ENCODE measurements at regions of chr1 and their contacts with region 1.

Region 1: GRCh38 chr1:110963691-110964399 is at the start of gene LRIF1:
- DNase-seq: peak; percentile 98 to 99
- ATAC-seq: peak; percentile 96 to 97
- H3K4me3 ChIP-seq: peak within 1 kb of the TSS; percentile 76 to 83 (median 80)
- H3K27ac ChIP-seq: peak within 1 kb of the TSS; percentile 89 to 97 (median 92)
- H3K4me1 ChIP-seq: peaks cover 32 to 34% of the 10 kb centered on the region in 2 donors
- H3K27me3 ChIP-seq: peaks cover 12 to 26% (median 13%) of the 10 kb centered on the region in 3 donors
- CTCF ChIP-seq: peak; percentile 57 to 74 (median 61)
- POLR2A ChIP-seq: peak; percentile 93
- total RNA-seq, gene LRIF1: 8.3 to 16.7 (median 12.3) TPM

Region 2: GRCh38 chr1:111448918-111449702 is 485.3 kb after region 1 on chr1 and contains the starts of genes ATP5PB and WDR77:
- in situ Hi-C with region 1: no loop called
- intact Hi-C with region 1: loop called (anchors 5 kb)
- DNase-seq: peak; percentile 96 to 98
- ATAC-seq: peak; percentile 98 to 99
- H3K4me3 ChIP-seq: peak within 1 kb of the TSS; percentile 76 to 97 (median 88)
- H3K27ac ChIP-seq: peak within 1 kb of the TSS; percentile 83 to 96 (median 92)
- H3K4me1 ChIP-seq: peaks cover 40 to 42% of the 10 kb centered on the region in 2 donors
- H3K27me3 ChIP-seq: no peaks in the 10 kb centered on the region
- CTCF ChIP-seq: peak in 1 of 5 experiments; percentile 30
- POLR2A ChIP-seq: peak in 1 of 2 donors; percentile 42
- total RNA-seq, gene ATP5PB: 232 to 350 (median 266) TPM
- total RNA-seq, gene WDR77: 53.3 to 59.2 (median 56.7) TPM